CD4-positive, alpha-beta T cell (primary cell): ENCODE measurements at regions of chr14 and their contacts with region 1.

Region 1: GRCh38 chr14:24215495-24216344 is at the start of gene MDP1:
- DNase-seq: peak; percentile 79 to 97 (median 86)
- ATAC-seq: peak; percentile 72
- H3K4me3 ChIP-seq: peak within 1 kb of the TSS; percentile 84
- H3K4me3 Mint-ChIP-seq: peak within 1 kb of the TSS; percentile 97
- H3K27ac ChIP-seq: peak within 1 kb of the TSS; percentile 92
- H3K27ac Mint-ChIP-seq: peak within 1 kb of the TSS; percentile 96
- H3K4me1 ChIP-seq: peaks cover 44% of the 10 kb centered on the region
- H3K4me1 Mint-ChIP-seq: peaks cover 49% of the 10 kb centered on the region
- H3K27me3 ChIP-seq: no peaks in the 10 kb centered on the region
- H3K27me3 Mint-ChIP-seq: no peaks in the 10 kb centered on the region
- CTCF ChIP-seq: peak; percentile 67
- total RNA-seq, gene MDP1: 3.2 to 3.7 TPM

Region 2: DNA sequence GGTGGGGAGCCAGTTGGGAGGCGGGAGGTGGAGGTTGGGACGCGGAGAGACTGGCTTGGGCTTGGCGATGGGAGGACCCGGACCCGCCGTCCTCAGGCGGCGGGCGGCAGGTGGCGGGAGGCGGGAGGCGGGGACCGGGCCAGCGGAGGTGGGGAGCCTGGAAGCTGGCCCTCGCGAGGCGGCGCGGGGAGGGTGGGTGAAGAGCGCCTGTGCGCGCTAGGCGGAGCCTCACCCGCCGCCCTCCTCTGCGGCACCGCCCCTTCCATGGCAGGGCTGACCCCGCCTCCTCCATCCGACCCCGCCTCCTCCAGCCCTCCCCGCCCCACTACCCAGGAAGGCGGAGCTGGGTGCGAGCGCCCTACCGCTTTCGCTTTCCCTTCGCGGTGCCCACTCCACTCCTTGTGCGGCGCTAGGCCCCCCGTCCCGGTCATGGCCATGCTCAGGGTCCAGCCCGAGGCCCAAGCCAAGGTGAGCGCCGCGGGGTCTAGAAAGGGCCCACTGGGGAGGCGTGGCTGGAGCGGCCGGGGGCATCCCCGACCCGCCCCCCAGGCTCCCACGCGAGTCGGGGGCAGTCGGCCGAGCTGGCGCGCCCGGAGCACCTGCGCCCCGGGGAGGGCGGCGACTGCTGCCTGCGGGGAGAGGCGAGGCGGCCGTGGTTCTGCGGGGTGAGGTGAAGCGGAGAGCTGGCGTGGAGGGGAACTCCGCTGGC is 79.7 kb before region 1 on chr14 and contains the start of gene PSME1:
- CTCF ChIA-PET with region 1: interaction called, 4 read pairs
- POLR2A ChIA-PET with region 1: interaction called, 11 read pairs
- intact Hi-C with region 1: loop called in 1 of 2 experiments (anchors 1 kb)
- DNase-seq: peak; percentile 89 to 97 (median 95)
- ATAC-seq: peak; percentile 97
- H3K4me3 ChIP-seq: peak within 1 kb of the TSS; percentile 74
- H3K4me3 Mint-ChIP-seq: peak within 1 kb of the TSS; percentile 94
- H3K27ac ChIP-seq: peak within 1 kb of the TSS; percentile 72 to 88
- H3K27ac Mint-ChIP-seq: peak within 1 kb of the TSS; percentile 85
- H3K4me1 ChIP-seq: peaks cover 68% of the 10 kb centered on the region
- H3K4me1 Mint-ChIP-seq: peaks cover 70% of the 10 kb centered on the region
- H3K27me3 ChIP-seq: no peaks in the 10 kb centered on the region
- H3K27me3 Mint-ChIP-seq: no peaks in the 10 kb centered on the region
- CTCF ChIP-seq: no peak
- total RNA-seq, gene PSME1: 166 to 171 TPM

Region 3: DNA sequence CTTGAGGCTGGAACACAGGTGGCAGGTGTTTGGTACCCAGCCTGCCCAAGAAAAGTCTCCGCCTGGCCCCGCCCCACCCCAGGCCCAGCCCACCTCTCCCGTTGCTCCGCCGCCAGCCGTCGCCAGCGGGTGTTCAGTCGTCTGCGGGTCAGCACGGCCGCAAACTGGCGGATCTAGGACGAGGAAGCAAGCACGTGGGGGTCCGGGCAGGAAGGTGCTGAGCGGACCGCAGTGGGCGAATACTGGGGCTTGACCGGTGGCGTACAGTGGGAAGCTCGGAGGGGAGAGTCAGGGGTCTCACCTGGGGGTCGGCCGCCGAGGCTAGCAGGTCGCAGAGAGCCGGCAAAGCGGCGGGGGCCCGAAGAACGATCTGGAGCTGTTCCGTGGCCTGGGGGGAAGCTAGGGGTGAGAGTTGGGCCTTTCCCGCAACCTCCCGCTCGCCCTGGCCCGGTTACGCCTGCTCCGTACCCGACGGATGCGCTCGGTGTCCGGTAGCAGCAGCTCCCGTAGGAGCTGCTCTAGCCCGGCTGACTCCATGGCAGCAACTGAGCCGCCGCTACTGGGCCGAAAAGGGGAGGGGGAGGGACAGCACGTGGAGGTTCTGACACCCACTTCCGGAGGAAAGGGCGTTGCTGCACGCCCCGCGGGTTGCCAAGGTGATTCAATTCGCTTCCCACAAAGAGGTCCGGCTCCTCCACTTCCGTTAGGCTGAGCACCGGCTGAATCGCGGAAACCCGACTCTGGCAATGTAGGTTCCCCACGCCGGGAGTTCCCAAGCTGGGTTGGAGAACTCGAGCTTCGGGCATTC is 27.3 kb before region 1 on chr14 and contains the start of gene IPO4:
- CTCF ChIA-PET with region 1: interaction called, 13 read pairs
- POLR2A ChIA-PET with region 1: interaction called, 99 read pairs
- intact Hi-C with region 1: loop called in 1 of 2 experiments (anchors 1 kb)
- DNase-seq: peak; percentile 86 to 98 (median 94)
- ATAC-seq: peak; percentile 91
- H3K4me3 ChIP-seq: peak within 1 kb of the TSS; percentile 75
- H3K4me3 Mint-ChIP-seq: peak within 1 kb of the TSS; percentile 93
- H3K27ac ChIP-seq: peak within 1 kb of the TSS; percentile 70 to 88
- H3K27ac Mint-ChIP-seq: peak within 1 kb of the TSS; percentile 91
- H3K4me1 ChIP-seq: peaks cover 32% of the 10 kb centered on the region
- H3K4me1 Mint-ChIP-seq: peaks cover 45% of the 10 kb centered on the region
- H3K27me3 ChIP-seq: no peaks in the 10 kb centered on the region
- H3K27me3 Mint-ChIP-seq: no peaks in the 10 kb centered on the region
- CTCF ChIP-seq: no peak
- total RNA-seq, gene IPO4: 36.6 to 37.9 TPM

Region 4: DNA sequence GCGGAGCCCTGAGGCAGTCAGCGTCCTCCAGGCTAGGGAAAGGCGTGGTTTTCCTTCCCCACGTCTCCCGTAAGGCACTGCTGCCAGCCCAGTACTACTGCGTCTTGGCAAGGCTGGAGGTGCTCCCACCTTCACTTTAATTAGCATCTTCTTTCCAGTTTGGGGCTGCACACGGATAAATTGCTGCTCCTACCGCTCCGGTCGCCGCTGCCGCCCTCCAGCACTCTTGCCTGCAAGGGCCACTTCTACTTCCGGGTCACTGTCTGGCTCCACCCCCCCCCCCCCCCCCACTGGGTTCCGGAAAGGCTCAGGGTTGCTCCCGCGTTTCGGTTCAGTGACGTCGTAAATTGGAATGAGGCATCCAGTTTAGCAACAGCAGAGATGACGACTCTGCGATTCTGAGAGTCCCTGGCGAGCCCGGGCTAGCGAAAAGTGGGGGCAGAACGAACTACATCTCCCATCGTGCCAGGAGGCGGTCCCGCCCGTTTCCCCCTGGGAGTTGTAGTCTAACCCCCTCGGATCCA is 16.5 kb after region 1 on chr14 and contains the start of gene NEDD8:
- CTCF ChIA-PET with region 1: interaction called, 14 read pairs
- POLR2A ChIA-PET with region 1: interaction called, 11 read pairs
- intact Hi-C with region 1: loop called (anchors 1 kb)
- DNase-seq: peak; percentile 73 to 94 (median 84)
- ATAC-seq: peak; percentile 87
- H3K4me3 ChIP-seq: peak within 1 kb of the TSS; percentile 98
- H3K4me3 Mint-ChIP-seq: peak within 1 kb of the TSS; percentile 96
- H3K27ac ChIP-seq: peak within 1 kb of the TSS; percentile 81 to 95
- H3K27ac Mint-ChIP-seq: peak within 1 kb of the TSS; percentile 93
- H3K4me1 ChIP-seq: peaks cover 29% of the 10 kb centered on the region
- H3K4me1 Mint-ChIP-seq: peaks cover 66% of the 10 kb centered on the region
- H3K27me3 ChIP-seq: no peaks in the 10 kb centered on the region
- H3K27me3 Mint-ChIP-seq: no peaks in the 10 kb centered on the region
- CTCF ChIP-seq: no peak
- total RNA-seq, gene NEDD8: 42.0 to 43.5 TPM

Region 5: DNA sequence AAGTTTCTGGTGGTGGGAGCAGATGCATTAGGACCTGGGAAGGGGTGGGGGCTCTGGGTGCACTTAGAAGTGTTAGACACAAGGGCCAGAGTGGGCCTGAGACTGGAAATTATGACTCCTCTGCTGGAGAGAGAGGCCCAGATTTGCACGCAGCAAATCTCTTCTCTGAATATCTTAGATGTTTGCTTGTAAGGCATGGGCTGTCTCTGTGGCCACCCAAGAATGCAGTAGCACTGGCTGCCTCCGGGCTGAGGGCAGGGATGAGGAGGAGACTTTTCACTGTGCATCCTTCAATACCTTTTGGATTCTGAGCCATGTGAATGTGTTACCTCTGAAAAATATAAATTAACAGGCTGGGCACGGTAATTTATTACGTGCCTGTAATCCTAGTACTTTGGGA is 69.6 kb after region 1 on chr14:
- CTCF ChIA-PET with region 1: no interaction called
- POLR2A ChIA-PET with region 1: no interaction called
- intact Hi-C with region 1: no loop called
- DNase-seq: no peak
- ATAC-seq: no peak
- H3K4me3 ChIP-seq: no peak overlapping the region
- H3K4me3 Mint-ChIP-seq: no peak overlapping the region
- H3K27ac ChIP-seq: no peak overlapping the region
- H3K27ac Mint-ChIP-seq: no peak overlapping the region
- H3K4me1 ChIP-seq: peaks cover 6% of the 10 kb centered on the region
- H3K4me1 Mint-ChIP-seq: peaks cover 1% of the 10 kb centered on the region
- H3K27me3 ChIP-seq: no peaks in the 10 kb centered on the region
- H3K27me3 Mint-ChIP-seq: no peaks in the 10 kb centered on the region
- CTCF ChIP-seq: no peak

Region 6: DNA sequence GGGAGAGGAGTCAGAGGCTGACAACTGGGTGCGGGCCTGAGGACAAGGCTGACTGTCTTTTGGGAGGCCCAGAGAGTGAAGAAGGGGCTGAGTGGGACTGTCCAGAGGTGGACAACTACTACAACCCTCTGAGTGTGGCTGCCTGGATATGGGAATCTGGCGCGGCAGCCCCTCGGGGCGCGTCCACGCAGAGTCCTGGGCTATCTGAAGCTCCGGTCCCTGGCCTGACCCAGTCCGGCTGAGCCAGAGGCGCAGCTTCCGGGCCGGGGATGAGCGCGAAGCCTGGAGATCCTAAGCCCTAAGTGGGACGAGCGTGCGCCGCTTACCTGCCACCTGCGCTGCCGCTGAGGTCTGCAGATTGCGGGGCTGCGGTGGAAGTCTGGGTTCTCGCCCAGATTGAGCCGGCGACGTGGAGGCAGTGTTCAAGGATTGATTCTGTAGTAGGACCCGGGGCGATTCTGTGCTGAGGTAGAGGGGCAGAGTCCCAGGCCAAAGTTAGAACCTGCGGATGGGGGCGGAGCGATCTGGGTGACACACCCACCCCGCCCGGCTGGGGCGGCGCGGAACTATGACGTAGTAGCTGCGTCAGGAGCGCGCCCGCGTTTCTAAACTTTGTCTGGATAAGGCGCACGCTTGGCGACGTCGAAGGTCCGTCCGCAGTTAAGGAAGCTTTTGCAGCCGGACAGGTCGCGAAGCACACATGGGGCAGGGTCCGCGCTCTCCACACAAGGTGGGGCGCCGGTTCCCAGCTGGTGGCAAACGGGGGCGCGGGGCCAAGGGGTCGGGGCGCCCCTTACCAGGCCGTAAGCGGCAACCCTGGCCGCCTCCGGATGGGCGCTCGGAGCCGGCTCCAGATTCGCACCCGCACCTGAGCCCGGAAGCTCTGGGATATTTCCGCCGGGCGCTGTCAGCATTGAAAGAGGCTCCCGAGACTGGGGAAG is 83.8 kb after region 1 on chr14 and contains the starts of genes DHRS1 and NOP9:
- CTCF ChIA-PET with region 1: interaction called, 26 read pairs
- POLR2A ChIA-PET with region 1: interaction called, 17 read pairs
- intact Hi-C with region 1: loop called (anchors 1 kb)
- DNase-seq: peak; percentile 86 to 98 (median 92)
- ATAC-seq: peak; percentile 77
- H3K4me3 ChIP-seq: peak within 1 kb of the TSS; percentile 87
- H3K4me3 Mint-ChIP-seq: peak within 1 kb of the TSS; percentile 99
- H3K27ac ChIP-seq: peak within 1 kb of the TSS; percentile 81 to 87
- H3K27ac Mint-ChIP-seq: peak within 1 kb of the TSS; percentile 98
- H3K4me1 ChIP-seq: peaks cover 56% of the 10 kb centered on the region
- H3K4me1 Mint-ChIP-seq: peaks cover 64% of the 10 kb centered on the region
- H3K27me3 ChIP-seq: no peaks in the 10 kb centered on the region
- H3K27me3 Mint-ChIP-seq: no peaks in the 10 kb centered on the region
- CTCF ChIP-seq: no peak
- total RNA-seq, gene DHRS1: 21.5 to 23.5 TPM
- total RNA-seq, gene NOP9: 25.9 to 27.5 TPM

Region 7: GRCh38 chr14:24332268-24332993 is 116.7 kb after region 1 on chr14:
- CTCF ChIA-PET with region 1: interaction called, 6 read pairs
- POLR2A ChIA-PET with region 1: interaction called, 6 read pairs
- intact Hi-C with region 1: loop called in 1 of 2 experiments (anchors 1 kb)
- DNase-seq: peak; percentile 75 to 95 (median 84)
- ATAC-seq: peak; percentile 93
- H3K4me3 ChIP-seq: peak overlapping the region; percentile 48
- H3K4me3 Mint-ChIP-seq: peak overlapping the region; percentile 86
- H3K27ac ChIP-seq: no peak overlapping the region
- H3K27ac Mint-ChIP-seq: peak overlapping the region; percentile 52
- H3K4me1 ChIP-seq: peaks cover 78% of the 10 kb centered on the region
- H3K4me1 Mint-ChIP-seq: peaks cover 59% of the 10 kb centered on the region
- H3K27me3 ChIP-seq: peaks cover 26 to 27% of the 10 kb centered on the region in 2 experiments
- H3K27me3 Mint-ChIP-seq: peaks cover 49% of the 10 kb centered on the region
- CTCF ChIP-seq: peak; percentile 81

Region 8: DNA sequence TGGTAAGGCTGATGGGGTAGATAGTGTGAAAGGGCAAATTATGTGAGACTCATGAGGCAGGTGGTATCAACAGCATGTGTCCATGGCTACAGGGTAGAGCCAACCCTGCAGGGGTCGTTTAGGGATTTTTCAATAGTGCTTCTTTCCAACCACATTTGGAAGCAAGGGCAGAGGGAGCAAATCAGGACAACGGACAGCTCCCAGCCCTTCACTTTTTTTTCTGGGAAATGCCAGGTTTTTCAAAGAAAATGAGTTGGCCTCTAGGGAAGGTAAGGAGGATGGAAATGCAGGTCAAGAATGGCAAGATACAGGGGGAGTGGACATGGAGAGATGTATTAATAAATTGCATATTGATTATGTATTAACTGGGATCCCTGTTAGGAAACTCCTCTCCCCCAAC is 297.3 kb after region 1 on chr14:
- CTCF ChIA-PET with region 1: no interaction called
- POLR2A ChIA-PET with region 1: no interaction called
- intact Hi-C with region 1: no loop called
- DNase-seq: no peak
- ATAC-seq: no peak
- H3K4me3 ChIP-seq: no peak overlapping the region
- H3K4me3 Mint-ChIP-seq: no peak overlapping the region
- H3K27ac ChIP-seq: no peak overlapping the region
- H3K27ac Mint-ChIP-seq: no peak overlapping the region
- H3K4me1 ChIP-seq: no peaks in the 10 kb centered on the region
- H3K4me1 Mint-ChIP-seq: no peaks in the 10 kb centered on the region
- H3K27me3 ChIP-seq: no peaks in the 10 kb centered on the region
- H3K27me3 Mint-ChIP-seq: peaks cover 20% of the 10 kb centered on the region
- CTCF ChIP-seq: no peak

Region 9: GRCh38 chr14:24535737-24536136 is 320.0 kb after region 1 on chr14:
- CTCF ChIA-PET with region 1: no interaction called
- POLR2A ChIA-PET with region 1: no interaction called
- intact Hi-C with region 1: no loop called
- DNase-seq: peak in 3 of 14 experiments; percentile 13 to 15 (median 15)
- ATAC-seq: no peak
- H3K4me3 ChIP-seq: no peak overlapping the region
- H3K4me3 Mint-ChIP-seq: no peak overlapping the region
- H3K27ac ChIP-seq: no peak overlapping the region
- H3K27ac Mint-ChIP-seq: no peak overlapping the region
- H3K4me1 ChIP-seq: no peaks in the 10 kb centered on the region
- H3K4me1 Mint-ChIP-seq: no peaks in the 10 kb centered on the region
- H3K27me3 ChIP-seq: peaks cover 6 to 12% of the 10 kb centered on the region in 2 experiments
- H3K27me3 Mint-ChIP-seq: peaks cover 9% of the 10 kb centered on the region
- CTCF ChIP-seq: no peak